IMR-90 (cell line): ENCODE measurements at regions of chr2 and their contacts with region 1.

Region 1: GRCh38 chr2:30231212-30231995 is at the start of gene LBH:
- DNase-seq: peak; percentile 90
- ATAC-seq: peak; percentile 73
- H3K4me3 ChIP-seq: peak within 1 kb of the TSS; percentile 84
- H3K27ac ChIP-seq: peak within 1 kb of the TSS; percentile 84
- H3K4me1 ChIP-seq: peaks cover 13% of the 10 kb centered on the region
- H3K27me3 ChIP-seq: no peaks in the 10 kb centered on the region
- CTCF ChIP-seq: 0 out of 2 replicates have a peak, but pooled peaks have one; percentile 7
- POLR2A ChIP-seq: peak; percentile 100
- RAD21 ChIP-seq: no peak
- total RNA-seq, gene LBH: 155 and 158 TPM in 2 replicates

Region 2: GRCh38 chr2:30252723-30253701 is 21.6 kb after region 1 on chr2:
- CTCF ChIA-PET with region 1: no interaction called
- POLR2A ChIA-PET with region 1: interaction called, 12 read pairs
- dilution Hi-C with region 1: no loop called
- in situ Hi-C with region 1: no loop called
- intact Hi-C with region 1: no loop called
- DNase-seq: peak; percentile 85
- ATAC-seq: peak; percentile 40
- H3K4me3 ChIP-seq: no peak overlapping the region
- H3K27ac ChIP-seq: peak overlapping the region; percentile 90
- H3K4me1 ChIP-seq: peaks cover 49% of the 10 kb centered on the region
- H3K27me3 ChIP-seq: no peaks in the 10 kb centered on the region
- CTCF ChIP-seq: no peak
- POLR2A ChIP-seq: no peak
- RAD21 ChIP-seq: peak; percentile 7; the same call in 1 of the 2 replicates

Region 3: GRCh38 chr2:30280611-30281434 is 49.4 kb after region 1 on chr2:
- CTCF ChIA-PET with region 1: no interaction called
- POLR2A ChIA-PET with region 1: interaction called, 24 read pairs
- dilution Hi-C with region 1: no loop called
- in situ Hi-C with region 1: no loop called
- intact Hi-C with region 1: no loop called
- DNase-seq: no peak
- ATAC-seq: peak; percentile 55
- H3K4me3 ChIP-seq: no peak overlapping the region
- H3K27ac ChIP-seq: peak overlapping the region; percentile 13; the same call in 1 of the 2 replicates
- H3K4me1 ChIP-seq: peaks cover 21% of the 10 kb centered on the region
- H3K27me3 ChIP-seq: no peaks in the 10 kb centered on the region
- CTCF ChIP-seq: no peak
- POLR2A ChIP-seq: no peak
- RAD21 ChIP-seq: no peak

Region 4: GRCh38 chr2:30410217-30410616 is 178.8 kb after region 1 on chr2:
- CTCF ChIA-PET with region 1: interaction called, 3 read pairs
- POLR2A ChIA-PET with region 1: interaction called, 5 read pairs
- dilution Hi-C with region 1: no loop called
- in situ Hi-C with region 1: no loop called
- intact Hi-C with region 1: loop called (anchors 5 kb)
- DNase-seq: peak; percentile 91
- ATAC-seq: 0 out of 2 replicates have a peak, but pooled peaks have one; percentile 1
- H3K4me3 ChIP-seq: no peak overlapping the region
- H3K27ac ChIP-seq: peak overlapping the region; percentile 69
- H3K4me1 ChIP-seq: peaks cover 45% of the 10 kb centered on the region
- H3K27me3 ChIP-seq: no peaks in the 10 kb centered on the region
- CTCF ChIP-seq: no peak
- POLR2A ChIP-seq: no peak
- RAD21 ChIP-seq: no peak

Region 5: DNA sequence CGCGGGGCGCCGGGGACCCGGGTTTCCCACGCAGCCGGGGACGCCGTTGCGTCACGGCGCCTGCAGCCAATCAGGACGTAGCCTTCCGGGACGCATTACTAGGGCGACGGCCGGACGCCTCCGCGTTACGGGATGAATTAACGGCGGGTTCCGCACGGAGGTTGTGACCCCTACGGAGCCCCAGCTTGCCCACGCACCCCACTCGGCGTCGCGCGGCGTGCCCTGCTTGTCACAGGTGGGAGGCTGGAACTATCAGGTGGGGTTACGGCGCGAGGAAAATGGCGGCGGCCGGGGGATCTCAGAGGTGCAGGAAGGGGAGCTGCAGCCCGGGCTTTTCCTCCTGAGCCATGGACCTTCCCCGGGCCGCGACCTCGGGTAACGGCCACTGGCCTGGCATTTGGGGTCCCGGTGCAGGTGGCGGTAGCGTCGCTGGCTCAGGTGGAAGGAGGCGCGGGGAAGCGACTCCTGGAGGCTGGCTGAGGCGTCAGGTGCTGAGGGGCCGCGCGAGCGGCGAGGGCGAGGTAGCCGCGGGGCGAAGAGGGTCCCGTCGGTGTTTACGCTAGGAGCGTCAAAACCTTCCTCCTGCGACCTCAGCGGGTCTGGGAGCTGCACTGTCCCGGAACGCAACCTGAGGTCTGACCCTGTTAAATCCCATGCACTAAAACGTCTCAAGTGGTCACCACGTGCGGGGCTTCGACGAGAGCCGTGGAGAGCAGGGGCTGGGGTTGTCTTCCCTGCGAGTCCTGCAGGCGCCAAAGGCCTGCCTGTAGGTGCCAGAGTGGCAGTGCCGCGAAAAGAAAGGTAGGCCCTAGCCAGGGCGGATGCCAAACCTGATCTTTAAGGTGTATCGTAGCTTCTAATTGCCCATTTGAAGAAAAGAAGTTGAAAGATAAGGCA is 216.0 kb after region 1 on chr2 and contains the start of gene LCLAT1:
- CTCF ChIA-PET with region 1: no interaction called
- POLR2A ChIA-PET with region 1: interaction called, 3 read pairs
- dilution Hi-C with region 1: no loop called
- in situ Hi-C with region 1: no loop called
- intact Hi-C with region 1: loop called (anchors 2 kb)
- DNase-seq: peak; percentile 72
- ATAC-seq: peak; percentile 96
- H3K4me3 ChIP-seq: peak within 1 kb of the TSS; percentile 86
- H3K27ac ChIP-seq: peak within 1 kb of the TSS; percentile 85
- H3K4me1 ChIP-seq: peaks cover 10% of the 10 kb centered on the region
- H3K27me3 ChIP-seq: no peaks in the 10 kb centered on the region
- CTCF ChIP-seq: no peak
- POLR2A ChIP-seq: no peak; the same call in 1 of the 2 replicates
- RAD21 ChIP-seq: peak; percentile 1; the same call in 1 of the 2 replicates
- total RNA-seq, gene LCLAT1: 11.5 and 18.3 TPM in 2 replicates

Region 6: DNA sequence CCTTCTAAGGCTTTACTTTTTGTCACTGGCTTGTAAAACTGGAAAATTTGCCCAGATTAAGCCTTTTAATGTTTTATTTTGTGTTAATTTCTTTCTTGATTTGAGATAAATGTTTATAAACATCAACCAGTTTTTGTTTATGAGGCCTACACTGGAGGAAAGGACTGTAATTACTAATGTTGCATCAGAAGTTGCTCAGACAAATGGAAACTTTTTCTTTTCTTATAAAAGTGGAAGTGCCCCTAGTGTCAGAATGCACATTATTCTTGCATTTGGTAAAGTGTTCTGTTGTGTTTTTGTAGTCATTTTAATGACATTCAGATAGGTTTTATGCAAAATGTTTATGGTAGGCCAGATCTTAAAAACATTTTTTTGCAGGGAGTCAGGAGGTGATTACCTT is 240.9 kb after region 1 on chr2:
- CTCF ChIA-PET with region 1: interaction called, 5 read pairs
- POLR2A ChIA-PET with region 1: interaction called, 25 read pairs
- dilution Hi-C with region 1: no loop called
- in situ Hi-C with region 1: no loop called
- intact Hi-C with region 1: no loop called
- DNase-seq: no peak
- ATAC-seq: no peak; the same call in 1 of the 2 replicates
- H3K4me3 ChIP-seq: no peak overlapping the region
- H3K27ac ChIP-seq: no peak overlapping the region
- H3K4me1 ChIP-seq: no peaks in the 10 kb centered on the region
- H3K27me3 ChIP-seq: no peaks in the 10 kb centered on the region
- CTCF ChIP-seq: 0 out of 2 replicates have a peak, but pooled peaks have one; percentile 5
- POLR2A ChIP-seq: no peak
- RAD21 ChIP-seq: no peak